Activated CD8-positive, alpha-beta T cell treated with anti-CD3 and anti-CD28 coated beads for 36 hours (primary cell): ENCODE measurements at regions of chr1 and their contacts with region 1.

Region 1: DNA sequence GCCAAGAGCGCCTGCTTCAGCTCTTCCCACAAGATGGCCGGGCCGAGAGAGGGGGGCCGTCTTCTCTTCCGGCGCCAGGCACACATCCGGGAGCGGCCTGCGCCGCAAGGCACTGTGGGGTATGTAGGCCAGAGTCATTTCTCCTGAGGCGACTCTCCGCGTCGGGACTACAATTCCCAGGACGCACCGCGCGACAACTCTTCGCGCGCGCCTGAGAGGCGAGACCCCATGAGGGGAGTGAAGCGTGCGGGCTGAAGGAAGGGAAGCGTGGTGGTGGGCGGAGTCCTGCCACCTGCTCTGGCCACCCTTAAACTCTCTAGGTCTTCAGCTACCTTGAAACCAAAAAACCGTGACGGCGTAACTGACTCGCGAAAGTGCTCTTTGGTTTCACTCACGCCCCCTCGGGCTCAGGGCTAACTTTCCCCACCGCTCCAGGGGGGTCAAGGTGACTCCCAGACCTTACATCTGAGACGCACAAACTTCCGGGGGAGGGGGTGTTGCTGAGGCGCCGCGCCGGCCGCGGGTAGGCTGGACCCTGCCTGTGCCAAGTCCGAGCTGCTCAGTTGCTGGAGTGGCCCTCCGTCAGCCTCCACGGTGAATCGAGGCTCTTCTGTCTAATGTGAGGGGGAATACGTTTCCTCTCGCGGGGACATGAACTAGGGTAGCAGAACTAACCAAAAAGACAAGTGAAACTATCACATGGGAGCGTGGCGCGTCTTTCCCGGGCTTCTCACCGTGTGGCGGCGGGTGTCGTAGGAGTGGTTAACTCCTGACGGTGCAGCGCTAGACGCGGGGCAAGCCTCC is at the start of gene SERBP1:
- DNase-seq: peak; percentile 98
- ATAC-seq: peak; percentile 92
- H3K4me3 Mint-ChIP-seq: peak within 1 kb of the TSS; percentile 84
- H3K27ac Mint-ChIP-seq: peak within 1 kb of the TSS; percentile 98
- H3K4me1 Mint-ChIP-seq: peaks cover 40% of the 10 kb centered on the region
- H3K27me3 Mint-ChIP-seq: no peaks in the 10 kb centered on the region
- CTCF ChIP-seq: no peak
- total RNA-seq, gene SERBP1: 476 to 491 TPM

Region 2: GRCh38 chr1:67332653-67333529 is 97.7 kb before region 1 on chr1:
- CTCF ChIA-PET with region 1: no interaction called
- POLR2A ChIA-PET with region 1: interaction called, 55 read pairs
- intact Hi-C with region 1: no loop called
- DNase-seq: peak; percentile 64
- ATAC-seq: peak; percentile 86
- H3K4me3 Mint-ChIP-seq: peak overlapping the region; percentile 28
- H3K27ac Mint-ChIP-seq: peak overlapping the region; percentile 95
- H3K4me1 Mint-ChIP-seq: peaks cover 72% of the 10 kb centered on the region
- H3K27me3 Mint-ChIP-seq: no peaks in the 10 kb centered on the region
- CTCF ChIP-seq: no peak

Region 3: GRCh38 chr1:67382292-67382691 is 48.3 kb before region 1 on chr1:
- CTCF ChIA-PET with region 1: no interaction called
- POLR2A ChIA-PET with region 1: no interaction called
- intact Hi-C with region 1: no loop called
- DNase-seq: no peak
- ATAC-seq: no peak
- H3K4me3 Mint-ChIP-seq: no peak overlapping the region
- H3K27ac Mint-ChIP-seq: no peak overlapping the region
- H3K4me1 Mint-ChIP-seq: peaks cover 3% of the 10 kb centered on the region
- H3K27me3 Mint-ChIP-seq: no peaks in the 10 kb centered on the region
- CTCF ChIP-seq: no peak

Region 4: DNA sequence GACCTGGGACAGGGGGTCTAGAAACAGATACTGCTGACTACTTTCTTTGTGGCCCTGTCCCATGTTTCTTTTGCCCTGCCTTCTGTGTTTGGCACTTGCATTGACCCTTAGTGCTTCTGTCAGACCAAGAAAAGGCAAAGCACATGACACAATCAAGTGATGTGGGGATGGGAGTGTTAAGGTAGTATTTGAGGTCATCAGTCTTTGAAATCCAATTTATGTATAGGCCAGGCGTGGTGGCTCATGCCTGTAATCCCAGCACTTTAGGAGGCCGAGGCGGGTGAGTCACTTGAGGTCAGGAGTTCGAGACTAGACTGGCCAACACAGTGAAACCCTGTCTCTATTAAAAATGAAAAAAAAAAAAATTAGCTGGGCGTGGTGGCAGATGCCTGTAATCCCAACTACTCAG is 26.3 kb before region 1 on chr1:
- CTCF ChIA-PET with region 1: interaction called, 5 read pairs
- POLR2A ChIA-PET with region 1: interaction called, 66 read pairs
- intact Hi-C with region 1: no loop called
- DNase-seq: no peak
- ATAC-seq: no peak
- H3K4me3 Mint-ChIP-seq: no peak overlapping the region
- H3K27ac Mint-ChIP-seq: no peak overlapping the region
- H3K4me1 Mint-ChIP-seq: peaks cover 14% of the 10 kb centered on the region
- H3K27me3 Mint-ChIP-seq: no peaks in the 10 kb centered on the region
- CTCF ChIP-seq: no peak

Region 5: DNA sequence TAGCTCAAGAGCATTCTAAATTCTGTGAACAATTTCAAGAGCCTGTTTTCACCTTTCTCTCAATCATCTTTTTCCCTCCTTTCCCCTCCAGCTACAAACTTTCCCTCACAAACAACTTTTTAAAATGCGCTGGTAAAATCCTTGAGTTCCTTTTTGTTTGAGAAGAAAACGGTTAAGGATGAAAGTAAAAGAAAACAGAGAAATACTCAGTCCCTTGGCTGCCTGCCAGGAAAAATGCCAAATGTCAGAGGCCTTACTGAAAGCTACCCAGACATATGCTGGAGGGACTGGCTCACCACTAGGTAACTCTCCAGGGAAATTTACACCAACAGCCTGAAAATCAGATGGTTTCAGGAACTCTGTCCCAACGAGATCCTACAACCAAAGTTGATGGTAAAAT is 10.6 kb after region 1 on chr1:
- CTCF ChIA-PET with region 1: interaction called, 11 read pairs
- POLR2A ChIA-PET with region 1: interaction called, 27 read pairs
- intact Hi-C with region 1: no loop called
- DNase-seq: peak; percentile 75
- ATAC-seq: peak; percentile 32
- H3K4me3 Mint-ChIP-seq: no peak overlapping the region
- H3K27ac Mint-ChIP-seq: peak overlapping the region; percentile 33
- H3K4me1 Mint-ChIP-seq: peaks cover 16% of the 10 kb centered on the region
- H3K27me3 Mint-ChIP-seq: no peaks in the 10 kb centered on the region
- CTCF ChIP-seq: no peak

Region 6: DNA sequence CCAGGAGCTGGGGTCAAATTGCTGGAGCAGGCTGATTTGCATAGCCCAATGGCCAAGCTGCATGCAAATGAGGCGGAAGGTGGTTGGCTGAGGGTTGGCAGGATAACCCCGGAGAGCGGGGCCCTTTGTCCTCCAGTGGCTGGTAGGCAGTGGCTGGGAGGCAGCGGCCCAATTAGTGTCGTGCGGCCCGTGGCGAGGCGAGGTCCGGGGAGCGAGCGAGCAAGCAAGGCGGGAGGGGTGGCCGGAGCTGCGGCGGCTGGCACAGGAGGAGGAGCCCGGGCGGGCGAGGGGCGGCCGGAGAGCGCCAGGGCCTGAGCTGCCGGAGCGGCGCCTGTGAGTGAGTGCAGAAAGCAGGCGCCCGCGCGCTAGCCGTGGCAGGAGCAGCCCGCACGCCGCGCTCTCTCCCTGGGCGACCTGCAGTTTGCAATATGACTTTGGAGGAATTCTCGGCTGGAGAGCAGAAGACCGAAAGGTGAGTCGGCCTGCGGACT is 254.6 kb after region 1 on chr1 and contains the start of gene GADD45A:
- CTCF ChIA-PET with region 1: no interaction called
- POLR2A ChIA-PET with region 1: interaction called, 11 read pairs
- intact Hi-C with region 1: no loop called
- DNase-seq: peak; percentile 97
- ATAC-seq: peak; percentile 85
- H3K4me3 Mint-ChIP-seq: peak within 1 kb of the TSS; percentile 90
- H3K27ac Mint-ChIP-seq: peak within 1 kb of the TSS; percentile 97
- H3K4me1 Mint-ChIP-seq: peaks cover 49% of the 10 kb centered on the region
- H3K27me3 Mint-ChIP-seq: no peaks in the 10 kb centered on the region
- CTCF ChIP-seq: no peak
- total RNA-seq, gene GADD45A: 33.5 to 34.3 TPM